ENCODE measurements at regions of chr10 and their contacts with region 1.

Region 1: DNA sequence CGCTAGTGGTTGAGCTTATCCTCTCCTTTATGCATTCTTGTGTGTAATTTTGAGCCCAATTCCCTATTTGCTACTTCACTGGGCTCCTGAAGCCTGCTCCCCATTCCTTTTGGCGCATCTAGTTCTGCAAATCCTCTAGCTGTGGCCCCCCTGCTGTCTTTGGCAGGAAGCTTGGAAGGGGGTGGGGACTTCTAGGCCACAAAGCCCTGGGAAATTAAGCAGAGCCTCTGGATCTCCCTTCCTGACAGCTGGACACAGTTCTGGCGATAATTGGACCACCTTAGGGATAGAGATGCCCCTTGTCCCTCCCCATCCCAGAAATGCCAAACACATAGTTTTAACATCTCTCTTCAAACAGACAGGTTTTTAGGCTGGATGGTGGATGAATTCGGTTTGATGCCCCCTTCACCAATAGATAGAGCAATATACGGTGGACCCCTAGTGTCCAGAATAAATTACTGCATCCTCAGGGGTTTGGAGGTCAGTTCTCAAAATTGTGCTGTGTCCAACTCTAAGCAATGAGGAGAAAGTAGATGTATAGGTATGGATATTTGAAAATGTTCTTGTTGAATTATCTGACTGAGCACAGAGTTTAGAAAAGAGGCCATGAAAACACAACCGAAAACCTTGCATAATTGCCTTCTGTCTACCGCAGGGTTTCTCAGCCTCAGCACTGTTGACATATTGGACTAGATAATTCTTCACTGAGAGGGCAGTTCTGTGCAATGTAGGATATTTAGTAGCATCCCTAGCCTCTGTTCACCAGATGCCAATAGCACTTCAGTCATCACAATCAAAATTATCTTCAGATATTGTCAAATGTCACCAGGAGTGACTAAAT is 75.5 kb downstream of the PAPSS2 start:
- DNase-seq: no peak

Region 2: GRCh38 chr10:87511526-87511925 is 223.7 kb before region 1 on chr10:
- intact Hi-C with region 1: no loop called
- DNase-seq: no peak

Region 3: GRCh38 chr10:87531908-87532622 is 203.1 kb before region 1 on chr10:
- intact Hi-C with region 1: loop called in 1 of 2 experiments (anchors 10 kb)
- DNase-seq: no peak

Region 4: DNA sequence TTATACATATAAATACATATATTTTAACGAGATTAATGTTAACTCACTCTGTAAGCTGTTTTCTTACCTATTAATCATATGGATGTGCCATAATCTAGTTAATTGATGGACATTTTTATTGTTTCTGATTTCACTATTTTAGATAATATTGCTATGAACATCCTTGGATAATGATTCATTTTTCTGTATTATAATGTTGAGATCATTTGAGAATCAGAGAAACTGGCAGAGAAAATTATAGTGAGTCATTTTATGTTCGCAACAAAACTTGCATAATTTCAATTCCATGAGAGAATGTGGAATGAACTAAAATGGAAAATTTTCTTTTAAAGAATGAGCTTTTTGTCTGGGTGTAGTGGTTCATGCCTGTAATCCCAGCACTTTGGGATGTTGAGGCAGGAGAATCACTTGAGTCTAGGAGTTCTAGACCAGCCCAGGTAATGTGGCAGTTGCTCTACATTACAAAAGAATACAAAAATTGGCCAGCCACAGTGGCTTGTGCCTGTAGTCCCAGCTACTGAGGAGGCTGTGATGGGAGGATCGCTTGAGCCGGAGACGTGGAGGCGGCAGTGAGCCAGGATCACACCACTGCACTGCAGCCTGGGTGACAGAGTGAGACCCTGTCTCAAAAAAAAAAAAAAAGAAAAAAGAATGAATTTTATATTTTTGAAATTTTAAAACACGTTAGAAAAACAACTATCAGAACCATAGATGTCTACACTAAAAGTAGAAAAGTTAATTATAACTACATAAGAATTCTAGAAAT is 35.0 kb before region 1 on chr10:
- intact Hi-C with region 1: no loop called
- DNase-seq: no peak

Region 5: DNA sequence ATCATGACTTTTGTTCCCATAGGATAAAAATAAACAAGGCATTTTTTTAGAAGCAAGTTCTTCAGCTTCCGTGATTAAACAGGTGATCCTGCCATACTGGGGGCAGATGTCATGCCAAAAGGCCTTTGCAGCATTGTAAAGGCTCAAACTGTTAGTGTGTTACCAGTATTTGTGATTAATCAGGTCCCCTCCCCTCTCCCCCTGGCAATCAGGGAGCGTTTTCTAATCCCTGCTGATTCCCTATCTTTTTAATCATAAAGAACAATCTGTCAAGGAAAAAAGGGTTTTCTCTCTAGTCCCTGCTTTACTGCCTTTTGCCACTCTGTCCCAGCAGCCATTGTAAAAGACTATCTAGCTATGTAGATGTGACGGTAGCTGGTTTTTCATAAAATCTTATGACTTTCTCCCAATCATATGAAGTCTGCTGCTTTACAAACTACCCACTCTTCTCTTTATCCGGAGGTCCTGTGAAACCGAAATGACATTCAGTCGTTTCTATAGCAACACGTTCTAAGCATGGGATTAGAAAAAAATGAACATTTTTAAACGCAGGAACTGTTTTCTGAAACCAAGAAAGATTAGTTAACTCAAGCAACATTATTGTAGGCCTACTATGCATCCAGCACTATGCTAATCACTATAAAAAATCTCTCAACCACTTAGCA is 637.0 kb after region 1 on chr10:
- intact Hi-C with region 1: no loop called
- DNase-seq: no peak